HEK293 (cell line): ENCODE measurements at regions of chr18 and their contacts with region 1.

Region 1: GRCh38 chr18:35240664-35241447 is at the start of gene ZNF397:
- H3K4me3 ChIP-seq: peak within 1 kb of the TSS; percentile 86
- H3K27ac ChIP-seq: peak within 1 kb of the TSS; percentile 76
- H3K4me1 ChIP-seq: no peaks in the 10 kb centered on the region
- CTCF ChIP-seq: no peak

Region 2: GRCh38 chr18:35290073-35290735 is 49.3 kb after region 1 on chr18 and contains the start of gene ZSCAN30:
- CTCF ChIA-PET with region 1: no interaction called
- POLR2A ChIA-PET with region 1: interaction called, 20 read pairs
- H3K4me3 ChIP-seq: peak within 1 kb of the TSS; percentile 66
- H3K27ac ChIP-seq: peak within 1 kb of the TSS; percentile 19; the same call in 1 of the 2 replicates
- H3K4me1 ChIP-seq: no peaks in the 10 kb centered on the region
- CTCF ChIP-seq: no peak; the same call in 1 of the 2 replicates

Region 3: DNA sequence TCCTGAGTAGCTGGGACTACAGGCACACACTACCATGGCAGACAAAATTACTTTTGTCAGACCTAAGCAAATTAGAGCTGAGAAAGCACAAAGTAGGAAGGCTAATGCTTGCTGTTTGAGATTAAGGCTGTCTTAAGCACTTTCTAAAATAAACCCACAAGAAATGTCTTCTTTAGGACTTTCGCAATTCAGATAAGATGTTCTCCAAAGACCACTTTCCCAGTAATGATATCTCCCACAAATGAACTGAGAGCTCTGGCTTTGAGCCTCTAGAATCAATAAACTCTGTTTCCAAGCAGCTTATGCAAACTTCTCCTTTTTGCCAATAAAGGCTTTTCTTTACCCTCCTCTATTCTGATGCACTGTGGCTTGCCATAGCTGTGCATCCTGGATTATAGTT is 308.7 kb after region 1 on chr18:
- CTCF ChIA-PET with region 1: no interaction called
- POLR2A ChIA-PET with region 1: no interaction called
- H3K4me3 ChIP-seq: no peak overlapping the region
- H3K27ac ChIP-seq: no peak overlapping the region
- H3K4me1 ChIP-seq: no peaks in the 10 kb centered on the region
- CTCF ChIP-seq: no peak